H1 (cell line): ENCODE measurements at regions of chr3 and their contacts with region 1.

Region 1: DNA sequence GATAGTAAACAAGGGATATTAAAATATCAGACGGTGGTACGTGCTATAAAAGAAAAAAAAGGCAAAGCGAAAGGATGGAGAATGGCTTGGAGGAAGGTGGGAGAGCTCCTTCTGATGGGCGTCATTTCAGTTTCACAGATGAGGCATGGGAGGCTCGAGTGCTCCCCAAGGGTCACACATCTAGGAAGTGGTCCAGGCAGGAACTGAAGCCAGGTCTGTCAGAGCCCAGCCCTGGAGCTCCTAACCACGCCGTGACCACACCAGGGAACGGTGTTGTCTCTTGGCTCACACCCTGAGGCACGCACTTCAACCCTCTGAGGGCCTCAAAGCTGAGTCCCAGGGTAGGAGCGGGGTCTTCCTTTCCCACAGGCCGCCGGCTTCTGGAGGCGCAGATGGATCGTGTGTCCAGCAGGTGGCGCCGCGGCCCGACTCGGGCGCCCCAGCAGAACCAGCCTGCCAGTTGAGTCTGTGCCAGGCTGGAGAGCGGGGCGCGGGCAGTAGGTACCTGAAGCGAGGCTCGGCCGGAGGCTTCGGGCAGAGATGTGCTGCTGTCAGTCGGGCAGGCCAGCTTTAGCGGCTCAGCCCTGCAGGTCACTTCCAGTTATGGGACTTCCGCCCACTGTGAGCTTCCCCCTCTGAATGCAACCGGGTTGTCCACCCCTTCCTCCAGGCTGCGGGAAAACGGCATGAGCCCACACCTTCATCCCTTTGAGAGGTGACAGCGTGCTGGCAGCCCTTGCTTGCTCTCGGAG is 68.1 kb downstream of the SLC6A1 start:
- DNase-seq: peak in 1 of 2 experiments; percentile 89
- H3K4me3 ChIP-seq: peak overlapping the region; percentile 4 to 57 (median 35); a peak in 7 of 8 replicates
- H3K27ac ChIP-seq: no peak overlapping the region
- H3K4me1 ChIP-seq: peaks cover 0 to 6% (median 1%) of the 10 kb centered on the region in 4 experiments; a peak in 2 of 7 replicates
- H3K27me3 ChIP-seq: peaks cover 9 to 21% (median 14%) of the 10 kb centered on the region in 4 experiments; a peak in 6 of 7 replicates
- CTCF ChIP-seq: peak; percentile 84 to 93 (median 85)
- EP300 ChIP-seq: no peak
- POLR2A ChIP-seq: no peak
- RAD21 ChIP-seq: peak; percentile 73 to 84

Region 2: GRCh38 chr3:10772271-10773161 is 288.2 kb before region 1 on chr3:
- CTCF ChIA-PET with region 1: interaction called, 25 read pairs
- POLR2A ChIA-PET with region 1: no interaction called
- DNase-seq: peak; percentile 43 to 89
- H3K4me3 ChIP-seq: no peak overlapping the region
- H3K27ac ChIP-seq: no peak overlapping the region
- H3K4me1 ChIP-seq: no peaks in the 10 kb centered on the region; a peak in 1 of 7 replicates
- H3K27me3 ChIP-seq: peaks cover 0 to 5% (median under 1%) of the 10 kb centered on the region in 4 experiments; a peak in 2 of 7 replicates
- CTCF ChIP-seq: peak; percentile 59 to 74 (median 67)
- EP300 ChIP-seq: no peak
- POLR2A ChIP-seq: no peak
- RAD21 ChIP-seq: peak; percentile 28 to 29

Region 3: DNA sequence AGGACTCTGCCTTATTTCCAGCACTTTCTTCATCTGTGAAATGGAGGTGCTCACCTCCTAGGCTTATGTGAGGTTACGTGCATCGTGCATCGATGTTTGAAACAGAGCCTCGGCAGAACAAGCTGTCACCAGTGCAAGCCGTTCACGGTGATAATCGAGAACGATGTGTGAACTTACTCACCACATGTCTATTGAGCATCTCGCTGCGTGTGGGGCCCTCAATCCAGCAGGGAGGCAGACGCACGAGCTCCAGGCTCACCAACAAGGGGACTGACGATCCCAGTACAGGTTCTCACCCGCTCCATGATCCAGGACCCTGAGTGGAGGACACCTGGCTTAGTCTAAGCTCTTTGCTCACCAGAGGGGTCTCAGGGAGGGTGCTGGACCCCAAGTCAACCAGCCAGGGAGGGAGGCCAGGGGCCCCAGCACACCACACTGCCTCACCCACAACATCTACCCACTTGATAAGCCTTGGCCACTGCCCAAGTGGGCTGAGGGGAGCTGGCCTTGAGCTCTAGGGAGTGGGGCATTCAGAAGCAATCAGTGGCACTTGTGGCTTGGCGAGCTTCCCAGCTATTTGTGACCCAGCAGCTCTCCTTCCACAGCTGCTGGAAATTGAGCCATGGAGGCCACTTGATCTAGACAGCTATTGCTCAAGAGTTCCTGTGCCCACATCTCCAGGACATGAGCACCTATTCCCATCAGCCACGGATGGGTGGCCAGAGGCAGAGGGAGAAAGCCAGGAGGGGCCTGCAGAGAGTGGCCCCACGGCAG is 102.5 kb before region 1 on chr3:
- CTCF ChIA-PET with region 1: interaction called, 19 read pairs
- POLR2A ChIA-PET with region 1: no interaction called
- DNase-seq: no peak
- H3K4me3 ChIP-seq: no peak overlapping the region
- H3K27ac ChIP-seq: no peak overlapping the region
- H3K4me1 ChIP-seq: no peaks in the 10 kb centered on the region; a peak in 1 of 7 replicates
- H3K27me3 ChIP-seq: no peaks in the 10 kb centered on the region
- CTCF ChIP-seq: no peak
- EP300 ChIP-seq: no peak
- POLR2A ChIP-seq: no peak
- RAD21 ChIP-seq: no peak

Region 4: GRCh38 chr3:11014253-11014652 is 46.4 kb before region 1 on chr3:
- CTCF ChIA-PET with region 1: interaction called, 29 read pairs
- POLR2A ChIA-PET with region 1: no interaction called
- DNase-seq: no peak
- H3K4me3 ChIP-seq: no peak overlapping the region
- H3K27ac ChIP-seq: no peak overlapping the region
- H3K4me1 ChIP-seq: no peaks in the 10 kb centered on the region; a peak in 1 of 7 replicates
- H3K27me3 ChIP-seq: no peaks in the 10 kb centered on the region
- CTCF ChIP-seq: no peak
- EP300 ChIP-seq: no peak
- POLR2A ChIP-seq: no peak
- RAD21 ChIP-seq: no peak

Region 5: DNA sequence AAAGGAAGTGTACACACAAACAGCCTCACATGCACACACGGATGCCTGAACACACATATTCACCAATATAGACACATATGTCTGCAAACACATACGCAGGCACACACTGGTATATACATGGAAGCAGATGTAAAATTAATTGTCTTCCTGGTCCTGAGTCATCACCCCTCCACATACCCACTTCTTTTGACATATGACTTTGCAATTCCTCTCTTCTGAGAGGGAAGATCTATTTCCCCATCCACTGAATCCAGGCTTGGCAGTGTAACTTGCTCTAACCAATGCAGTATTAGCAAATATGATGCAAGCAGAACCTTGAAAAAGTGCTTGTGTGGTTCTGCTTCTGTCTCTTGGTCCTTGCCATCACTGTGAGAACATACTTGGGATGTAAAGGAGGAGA is 16.8 kb after region 1 on chr3:
- CTCF ChIA-PET with region 1: interaction called, 38 read pairs
- POLR2A ChIA-PET with region 1: no interaction called
- DNase-seq: no peak
- H3K4me3 ChIP-seq: no peak overlapping the region
- H3K27ac ChIP-seq: no peak overlapping the region
- H3K4me1 ChIP-seq: peaks cover 0 to 3% (median 0%) of the 10 kb centered on the region in 4 experiments; a peak in 1 of 7 replicates
- H3K27me3 ChIP-seq: no peaks in the 10 kb centered on the region
- CTCF ChIP-seq: no peak
- EP300 ChIP-seq: no peak
- POLR2A ChIP-seq: no peak
- RAD21 ChIP-seq: no peak

Region 6: GRCh38 chr3:11155341-11156025 is 94.8 kb after region 1 on chr3:
- CTCF ChIA-PET with region 1: interaction called, 42 read pairs
- POLR2A ChIA-PET with region 1: no interaction called
- DNase-seq: peak in 1 of 2 experiments; percentile 76
- H3K4me3 ChIP-seq: peak overlapping the region; percentile 24 to 68 (median 46); a peak in 7 of 8 replicates
- H3K27ac ChIP-seq: no peak overlapping the region
- H3K4me1 ChIP-seq: peaks cover 0 to 6% (median under 1%) of the 10 kb centered on the region in 4 experiments; a peak in 3 of 7 replicates
- H3K27me3 ChIP-seq: peaks cover 5 to 37% (median 30%) of the 10 kb centered on the region in 4 experiments
- CTCF ChIP-seq: peak; percentile 68 to 88 (median 87)
- EP300 ChIP-seq: no peak
- POLR2A ChIP-seq: no peak
- RAD21 ChIP-seq: peak; percentile 71 to 73

Region 7: GRCh38 chr3:11306817-11307589 is 246.3 kb after region 1 on chr3:
- CTCF ChIA-PET with region 1: no interaction called
- POLR2A ChIA-PET with region 1: no interaction called
- DNase-seq: no peak
- H3K4me3 ChIP-seq: no peak overlapping the region
- H3K27ac ChIP-seq: no peak overlapping the region
- H3K4me1 ChIP-seq: no peaks in the 10 kb centered on the region
- H3K27me3 ChIP-seq: peaks cover 0 to under 1% (median 0%) of the 10 kb centered on the region in 4 experiments; a peak in 1 of 7 replicates
- CTCF ChIP-seq: no peak
- EP300 ChIP-seq: no peak
- POLR2A ChIP-seq: no peak
- RAD21 ChIP-seq: no peak

Region 8: GRCh38 chr3:11335056-11335608 is 274.5 kb after region 1 on chr3:
- CTCF ChIA-PET with region 1: interaction called, 14 read pairs
- POLR2A ChIA-PET with region 1: interaction called, 3 read pairs
- DNase-seq: no peak
- H3K4me3 ChIP-seq: no peak overlapping the region
- H3K27ac ChIP-seq: no peak overlapping the region
- H3K4me1 ChIP-seq: no peaks in the 10 kb centered on the region
- H3K27me3 ChIP-seq: no peaks in the 10 kb centered on the region
- CTCF ChIP-seq: peak in 2 of 3 experiments; percentile 49 to 56; a peak in 2 of 4 replicates
- EP300 ChIP-seq: no peak
- POLR2A ChIP-seq: no peak
- RAD21 ChIP-seq: peak; percentile 75 to 77

Region 9: GRCh38 chr3:11410564-11410963 is 349.9 kb after region 1 on chr3:
- CTCF ChIA-PET with region 1: no interaction called
- POLR2A ChIA-PET with region 1: no interaction called
- DNase-seq: no peak
- H3K4me3 ChIP-seq: no peak overlapping the region
- H3K27ac ChIP-seq: no peak overlapping the region
- H3K4me1 ChIP-seq: no peaks in the 10 kb centered on the region
- H3K27me3 ChIP-seq: no peaks in the 10 kb centered on the region
- CTCF ChIP-seq: no peak
- EP300 ChIP-seq: no peak
- POLR2A ChIP-seq: no peak
- RAD21 ChIP-seq: no peak